Heart left ventricle (tissue), 16 donors: ENCODE measurements at regions of chr11 and their contacts with region 1.

Region 1: DNA sequence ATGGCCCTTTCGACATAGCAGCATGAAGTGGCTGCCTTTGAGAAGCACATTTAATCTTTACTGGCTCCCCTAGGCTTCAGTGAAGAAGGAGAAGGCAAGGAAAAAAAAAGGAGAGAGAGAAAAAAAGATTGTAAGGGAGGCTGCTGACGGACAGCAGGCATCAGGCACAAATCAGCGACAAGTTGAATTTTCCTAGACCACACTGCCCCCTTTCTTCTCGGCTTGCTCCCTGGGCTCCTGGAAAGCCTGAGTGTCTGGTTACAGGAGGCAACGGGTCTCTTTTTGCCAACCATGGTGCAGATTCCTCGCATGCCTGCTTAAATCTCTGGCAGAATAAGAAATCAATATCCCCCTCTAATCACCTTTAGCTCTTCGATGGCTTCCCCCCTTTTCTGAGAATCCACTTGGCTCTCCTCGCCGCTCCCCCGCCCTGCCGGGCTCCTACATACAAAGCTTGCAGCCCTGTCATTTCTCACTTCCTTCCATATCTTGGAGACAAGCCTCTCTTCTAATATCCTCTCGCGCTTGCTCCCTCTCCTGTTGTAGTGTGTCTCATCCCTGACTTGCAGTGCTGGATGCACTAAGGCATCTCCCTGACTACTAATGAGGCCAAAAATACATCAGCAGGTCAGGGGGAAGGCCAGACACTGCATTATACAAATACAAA is 14.3 kb downstream of the BLID start:
- DNase-seq: peak; percentile 66 to 76 (median 67)
- ATAC-seq: peak; percentile 82 to 89 (median 88)
- H3K4me3 ChIP-seq: peak overlapping the region; percentile 34 to 81 (median 61)
- H3K27ac ChIP-seq: peak overlapping the region; percentile 70 to 95 (median 89)
- H3K4me1 ChIP-seq: peaks cover 0 to 25% (median 6%) of the 10 kb centered on the region in 12 donors
- H3K27me3 ChIP-seq: peaks cover 0 to 29% (median 4%) of the 10 kb centered on the region in 9 donors
- CTCF ChIP-seq: peak; percentile 35 to 80 (median 61)
- POLR2A ChIP-seq: no peak

Region 2: DNA sequence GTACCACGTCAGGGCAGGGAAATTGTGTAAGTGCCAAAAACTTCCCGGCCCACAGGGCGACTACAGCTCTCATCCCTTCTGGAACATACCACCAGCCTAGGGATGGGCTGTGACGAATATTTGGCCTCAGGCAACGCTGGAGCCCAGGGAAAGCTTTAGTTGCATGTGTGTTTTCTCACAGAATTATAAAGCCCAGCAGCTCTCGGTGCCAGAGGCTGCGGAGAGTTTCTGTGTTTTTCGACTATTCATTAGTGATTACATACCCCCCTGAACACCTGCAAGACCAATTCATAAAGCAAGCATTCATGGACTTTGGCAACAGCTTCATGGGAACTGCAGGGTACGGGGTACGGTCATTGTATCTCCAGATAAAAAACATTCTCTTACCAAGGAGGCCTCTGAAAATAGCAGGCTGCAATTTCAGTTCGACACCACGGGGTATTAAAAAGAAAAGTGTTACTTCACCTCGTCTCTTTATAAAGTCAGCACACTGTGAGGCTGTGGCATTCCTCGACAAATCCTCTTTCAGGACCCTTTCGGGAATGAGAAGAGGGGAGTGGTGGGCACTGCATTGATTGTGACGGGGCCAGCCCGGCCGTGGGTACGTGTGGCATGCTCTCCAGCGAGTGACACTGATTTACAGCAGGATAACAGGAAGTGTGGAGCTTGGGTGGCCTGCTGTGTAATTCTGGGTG is 405.4 kb before region 1 on chr11:
- intact Hi-C with region 1: loop called in 1 of 10 experiments (anchors 2 kb)
- DNase-seq: peak in 4 of 5 donors; percentile 35 to 53 (median 40)
- ATAC-seq: peak; percentile 78 to 87 (median 84)
- H3K4me3 ChIP-seq: peak overlapping the region in 6 of 12 donors; percentile 3 to 32 (median 18)
- H3K27ac ChIP-seq: peak overlapping the region; percentile 59 to 94 (median 79)
- H3K4me1 ChIP-seq: peaks cover 0 to 26% (median 5%) of the 10 kb centered on the region in 12 donors
- H3K27me3 ChIP-seq: no peaks in the 10 kb centered on the region
- CTCF ChIP-seq: no peak
- POLR2A ChIP-seq: no peak

Region 3: GRCh38 chr11:122020902-122021301 is 80.9 kb before region 1 on chr11:
- intact Hi-C with region 1: loop called in 5 of 10 experiments (anchors 1 to 10 kb)
- DNase-seq: no peak
- ATAC-seq: no peak
- H3K4me3 ChIP-seq: no peak overlapping the region
- H3K27ac ChIP-seq: no peak overlapping the region
- H3K4me1 ChIP-seq: peaks cover 0 to 9% (median 0%) of the 10 kb centered on the region in 12 donors
- H3K27me3 ChIP-seq: no peaks in the 10 kb centered on the region
- CTCF ChIP-seq: peak; percentile 19 to 61 (median 44)
- POLR2A ChIP-seq: no peak

Region 4: DNA sequence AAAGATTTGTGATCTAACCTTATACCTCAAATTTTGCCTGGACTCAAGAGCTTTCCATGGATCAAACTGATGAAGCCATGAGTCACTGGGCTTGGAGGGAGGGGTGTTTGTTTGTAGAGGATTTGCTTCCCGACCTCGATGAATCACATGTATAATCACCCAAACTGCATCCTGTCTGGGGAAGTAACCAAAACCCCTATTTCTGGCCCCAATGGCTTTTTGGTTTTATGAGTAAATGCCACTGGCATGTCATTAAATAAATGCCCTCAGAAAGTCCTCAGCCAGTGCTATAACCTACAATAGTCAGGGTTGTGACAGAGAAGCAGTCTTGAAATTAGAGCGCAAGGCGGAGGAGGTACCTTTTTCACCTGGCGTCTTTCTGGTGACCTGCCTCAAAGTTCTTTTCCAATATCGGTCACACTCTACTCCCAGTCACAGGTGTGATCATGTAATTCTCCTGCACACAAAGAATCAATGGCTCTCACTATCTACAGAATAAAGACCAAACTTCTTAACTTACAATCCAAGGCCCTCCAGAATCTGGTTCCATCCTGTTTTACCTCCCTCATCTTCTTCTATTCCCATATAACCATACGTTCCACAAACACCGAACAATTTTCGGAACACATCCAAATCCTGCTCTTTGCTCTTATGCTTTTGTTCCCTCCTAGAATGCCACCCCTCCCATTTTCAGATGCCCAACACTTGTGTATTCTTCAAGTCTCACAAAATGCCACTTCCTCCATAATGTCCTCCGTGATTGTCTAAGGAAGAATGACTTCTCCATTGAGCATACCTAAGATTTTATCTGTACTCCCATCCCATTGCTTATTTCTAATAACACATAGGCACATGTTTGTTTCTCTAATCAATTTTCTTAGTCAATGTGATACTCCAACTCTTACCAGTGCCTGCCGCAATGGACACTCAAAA is 95.6 kb after region 1 on chr11:
- intact Hi-C with region 1: loop called (anchors 1 to 10 kb)
- DNase-seq: peak in 1 of 5 donors; percentile 53
- ATAC-seq: peak in 3 of 4 donors; percentile 61 to 91 (median 75)
- H3K4me3 ChIP-seq: no peak overlapping the region
- H3K27ac ChIP-seq: peak overlapping the region in 2 of 12 donors; percentile 7 to 55
- H3K4me1 ChIP-seq: peaks cover 0 to 47% (median 8%) of the 10 kb centered on the region in 12 donors
- H3K27me3 ChIP-seq: no peaks in the 10 kb centered on the region
- CTCF ChIP-seq: no peak
- POLR2A ChIP-seq: no peak

Region 5: DNA sequence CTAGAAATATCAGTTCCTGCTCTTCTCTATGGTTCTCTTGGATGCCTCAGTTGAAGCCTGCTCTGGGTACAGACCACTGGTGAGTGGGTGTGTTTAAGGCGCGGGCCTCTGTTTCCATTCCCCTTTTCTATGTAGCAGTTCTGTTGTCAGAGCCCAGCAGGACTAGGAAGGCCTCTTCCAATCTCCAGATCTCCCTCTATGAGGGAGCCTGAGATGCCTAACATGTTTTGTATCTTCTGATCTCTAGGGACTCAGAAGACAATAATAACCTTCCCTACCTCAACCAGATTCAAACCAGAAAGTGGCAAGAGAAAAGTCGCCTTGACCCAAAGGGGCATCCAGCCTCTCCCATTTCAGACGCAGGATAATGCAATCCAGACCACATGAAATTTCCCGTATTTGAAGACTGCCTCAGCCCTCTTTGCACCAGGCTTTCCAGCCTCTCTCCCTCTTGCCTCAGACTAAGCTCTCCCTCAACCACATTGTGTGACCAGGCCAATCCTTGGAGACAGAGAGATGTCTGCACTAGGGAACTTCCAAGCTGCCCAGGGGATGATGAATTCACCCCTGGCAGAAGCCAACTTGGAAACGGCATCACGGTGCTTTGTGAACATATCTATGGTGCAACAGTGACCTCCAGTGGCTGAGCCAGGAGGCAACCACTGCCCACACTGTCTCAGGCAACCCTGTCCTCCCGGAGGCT is 403.7 kb after region 1 on chr11:
- intact Hi-C with region 1: loop called in 9 of 10 experiments (anchors 5 to 10 kb)
- DNase-seq: peak; percentile 79 to 82 (median 80)
- ATAC-seq: peak; percentile 91 to 99 (median 98)
- H3K4me3 ChIP-seq: no peak overlapping the region
- H3K27ac ChIP-seq: no peak overlapping the region
- H3K4me1 ChIP-seq: peaks cover 0 to 11% (median 4%) of the 10 kb centered on the region in 12 donors
- H3K27me3 ChIP-seq: no peaks in the 10 kb centered on the region
- CTCF ChIP-seq: peak; percentile 73 to 93 (median 87)
- POLR2A ChIP-seq: no peak